CD4-positive, alpha-beta memory T cell (primary cell): ENCODE measurements at regions of chr11 and their contacts with region 1.

Region 1: DNA sequence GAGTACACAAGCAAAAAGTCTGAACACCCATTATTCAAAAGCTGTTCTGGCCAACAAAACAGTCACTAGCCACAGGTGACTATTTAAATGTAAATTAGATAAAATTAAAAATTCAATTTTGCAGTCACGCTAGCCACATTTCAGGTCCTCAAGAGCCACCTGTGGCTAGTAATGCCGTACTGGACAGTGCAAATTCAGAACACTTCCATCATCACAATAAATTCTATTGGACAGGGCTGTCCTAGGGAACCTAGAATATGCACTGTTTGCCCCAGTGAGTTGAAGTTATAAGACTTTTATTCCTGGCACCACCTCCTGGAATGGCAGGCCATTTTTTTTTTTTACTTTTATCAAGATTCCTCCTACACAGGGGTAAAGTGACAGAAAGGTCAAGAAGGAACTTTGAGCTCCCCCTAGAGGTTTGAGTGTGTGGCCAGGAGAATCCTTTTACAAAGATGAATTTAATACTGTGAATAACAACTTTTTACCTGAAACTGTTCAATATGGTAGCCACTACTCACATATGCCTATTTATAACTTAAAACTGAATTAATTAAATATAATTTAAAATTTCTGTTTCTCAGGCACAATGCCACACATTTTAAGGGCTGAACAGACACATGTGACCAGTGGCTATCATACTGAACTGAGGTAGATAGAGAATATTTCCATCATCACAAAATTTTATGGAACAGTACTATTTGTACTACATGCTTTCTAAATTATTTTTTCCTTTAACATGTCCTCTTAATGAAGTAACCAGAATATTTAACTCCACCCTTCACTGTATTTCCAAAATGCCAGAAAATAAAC is 6.5 kb downstream of the MSANTD2 start:
- DNase-seq: peak in 4 of 5 donors; percentile 30 to 46 (median 36)
- H3K4me3 ChIP-seq: no peak overlapping the region
- H3K4me3 Mint-ChIP-seq: no peak overlapping the region
- H3K27ac ChIP-seq: no peak overlapping the region
- H3K27ac Mint-ChIP-seq: no peak overlapping the region
- H3K4me1 ChIP-seq: peaks cover 12% of the 10 kb centered on the region
- H3K4me1 Mint-ChIP-seq: peaks cover 15 to 47% (median 26%) of the 10 kb centered on the region in 4 donors
- H3K27me3 ChIP-seq: no peaks in the 10 kb centered on the region
- H3K27me3 Mint-ChIP-seq: no peaks in the 10 kb centered on the region

Region 2: DNA sequence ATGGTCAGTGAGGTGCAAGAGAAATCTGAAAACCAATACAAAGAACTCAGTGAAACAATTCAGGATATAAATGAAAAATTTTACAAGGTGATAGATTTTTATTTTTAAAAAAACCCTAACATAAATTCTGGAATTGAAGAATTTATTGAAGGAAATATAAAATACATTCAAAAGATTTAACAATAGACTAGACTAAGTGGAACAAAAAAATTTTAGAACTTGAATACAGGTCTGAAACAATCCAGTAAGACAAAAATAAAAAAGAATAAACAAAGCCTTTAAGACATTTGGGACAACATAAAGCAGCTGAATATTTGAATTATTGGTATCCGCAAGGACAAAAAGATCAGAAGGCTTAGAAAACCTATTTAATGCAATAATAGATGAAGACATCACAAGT is 111.2 kb before region 1 on chr11:
- CTCF ChIA-PET with region 1: no interaction called
- POLR2A ChIA-PET with region 1: no interaction called
- intact Hi-C with region 1: no loop called
- DNase-seq: no peak
- H3K4me3 ChIP-seq: no peak overlapping the region
- H3K4me3 Mint-ChIP-seq: no peak overlapping the region
- H3K27ac ChIP-seq: no peak overlapping the region
- H3K27ac Mint-ChIP-seq: no peak overlapping the region
- H3K4me1 ChIP-seq: no peaks in the 10 kb centered on the region
- H3K4me1 Mint-ChIP-seq: no peaks in the 10 kb centered on the region
- H3K27me3 ChIP-seq: peaks cover 5% of the 10 kb centered on the region
- H3K27me3 Mint-ChIP-seq: peaks cover 5 to 8% of the 10 kb centered on the region in 2 donors

Region 3: GRCh38 chr11:124769801-124770639 is 23.7 kb before region 1 on chr11:
- CTCF ChIA-PET with region 1: interaction called, 37 read pairs
- POLR2A ChIA-PET with region 1: no interaction called
- intact Hi-C with region 1: no loop called
- DNase-seq: no peak
- H3K4me3 ChIP-seq: no peak overlapping the region
- H3K4me3 Mint-ChIP-seq: no peak overlapping the region
- H3K27ac ChIP-seq: no peak overlapping the region
- H3K27ac Mint-ChIP-seq: no peak overlapping the region
- H3K4me1 ChIP-seq: no peaks in the 10 kb centered on the region
- H3K4me1 Mint-ChIP-seq: no peaks in the 10 kb centered on the region
- H3K27me3 ChIP-seq: no peaks in the 10 kb centered on the region
- H3K27me3 Mint-ChIP-seq: no peaks in the 10 kb centered on the region

Region 4: DNA sequence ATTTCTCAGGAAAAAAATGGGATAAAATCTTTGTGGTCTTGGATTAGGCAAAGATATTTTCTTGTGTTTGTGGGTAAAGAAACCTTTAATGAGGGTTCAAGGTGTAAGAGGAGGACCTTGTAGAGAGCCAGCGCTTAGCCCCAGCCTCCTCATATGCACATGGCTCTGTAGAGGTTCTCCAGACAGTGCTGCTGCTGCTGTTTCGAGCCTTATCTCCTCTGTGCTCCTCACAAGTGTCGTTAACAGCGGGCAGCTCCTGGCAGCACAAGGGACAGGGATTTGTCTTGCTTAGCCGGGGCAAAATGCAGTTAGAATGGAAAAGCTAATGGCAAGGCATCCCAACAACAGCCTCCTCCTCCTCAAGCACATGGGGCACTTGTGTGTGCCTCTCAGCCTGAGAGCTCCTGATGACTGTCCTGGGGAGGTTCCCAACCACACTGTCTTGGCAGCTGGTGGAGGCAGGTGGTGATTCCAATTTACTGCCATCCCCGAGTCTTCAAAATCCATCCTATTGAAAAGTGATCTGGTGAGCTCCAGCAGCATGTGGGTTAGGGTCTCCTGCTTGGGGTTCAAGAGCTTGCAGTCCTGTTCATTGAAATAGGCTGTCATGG is 14.1 kb after region 1 on chr11:
- CTCF ChIA-PET with region 1: interaction called, 22 read pairs
- POLR2A ChIA-PET with region 1: no interaction called
- intact Hi-C with region 1: no loop called
- DNase-seq: no peak
- H3K4me3 ChIP-seq: no peak overlapping the region
- H3K4me3 Mint-ChIP-seq: no peak overlapping the region
- H3K27ac ChIP-seq: no peak overlapping the region
- H3K27ac Mint-ChIP-seq: no peak overlapping the region
- H3K4me1 ChIP-seq: no peaks in the 10 kb centered on the region
- H3K4me1 Mint-ChIP-seq: no peaks in the 10 kb centered on the region
- H3K27me3 ChIP-seq: no peaks in the 10 kb centered on the region
- H3K27me3 Mint-ChIP-seq: peaks cover 8 to 11% of the 10 kb centered on the region in 2 donors

Region 5: GRCh38 chr11:125141686-125142535 is 348.2 kb after region 1 on chr11:
- CTCF ChIA-PET with region 1: no interaction called
- POLR2A ChIA-PET with region 1: no interaction called
- intact Hi-C with region 1: no loop called
- DNase-seq: peak; percentile 40 to 53 (median 44)
- H3K4me3 ChIP-seq: no peak overlapping the region
- H3K4me3 Mint-ChIP-seq: peak overlapping the region in 1 of 8 donors; percentile 38
- H3K27ac ChIP-seq: no peak overlapping the region
- H3K27ac Mint-ChIP-seq: peak overlapping the region in 1 of 7 donors; percentile 12
- H3K4me1 ChIP-seq: peaks cover 5% of the 10 kb centered on the region
- H3K4me1 Mint-ChIP-seq: peaks cover 2 to 7% (median 4%) of the 10 kb centered on the region in 4 donors
- H3K27me3 ChIP-seq: peaks cover 12% of the 10 kb centered on the region
- H3K27me3 Mint-ChIP-seq: peaks cover 24 to 44% of the 10 kb centered on the region in 2 donors